ENCODE measurements at regions of chr1 and their contacts with region 1.

Region 1: DNA sequence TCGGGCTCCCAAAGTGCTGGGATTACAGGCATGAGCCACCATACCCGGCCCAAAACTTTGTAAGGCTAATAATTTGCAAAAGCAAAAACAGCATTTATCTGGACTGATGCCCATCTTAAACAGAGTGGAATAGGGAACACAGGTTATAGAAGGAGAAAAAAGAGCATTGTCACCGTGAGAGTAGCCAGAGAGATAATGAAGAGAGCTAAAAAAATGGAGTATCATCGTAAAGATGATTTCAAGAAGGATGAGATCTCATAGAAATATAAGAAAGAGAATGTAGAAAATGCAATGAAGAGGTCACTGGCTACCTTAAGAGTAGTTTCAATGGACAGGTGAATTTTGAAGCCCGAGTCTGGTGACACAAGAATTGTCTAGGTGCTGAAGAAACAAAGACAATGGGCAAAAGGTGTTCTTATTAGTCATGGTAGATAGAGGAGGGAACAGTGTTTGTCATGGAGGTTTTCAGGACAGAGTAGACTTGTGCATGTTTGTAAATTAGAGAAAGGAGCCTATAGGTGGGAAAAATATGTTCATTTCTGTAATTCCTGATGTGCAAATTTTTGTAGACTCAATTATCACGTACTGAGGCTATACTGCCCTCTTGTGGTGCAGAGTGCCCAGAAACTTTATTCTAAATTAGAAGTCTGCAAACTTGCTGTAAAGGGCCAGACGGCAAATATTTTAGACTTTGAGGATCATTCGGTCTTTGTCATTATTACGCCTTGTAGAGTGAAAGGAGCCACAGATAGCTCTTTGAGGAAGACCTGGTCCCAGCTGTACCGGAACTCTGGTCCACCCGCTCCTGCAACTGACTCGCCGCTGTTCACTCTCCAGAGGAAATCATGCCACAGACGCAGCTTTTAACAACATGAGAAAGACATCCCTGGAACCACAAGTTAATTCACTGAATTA is 8.1 kb upstream of the TMEM183A start:
- DNase-seq: peak; percentile 85
- H3K4me3 Mint-ChIP-seq: no peak overlapping the region
- H3K27ac Mint-ChIP-seq: no peak overlapping the region
- H3K4me1 Mint-ChIP-seq: peaks cover 15% of the 10 kb centered on the region
- H3K27me3 Mint-ChIP-seq: peaks cover 45% of the 10 kb centered on the region
- CTCF ChIP-seq: peak; percentile 96

Region 2: GRCh38 chr1:202074985-202075750 is 923.9 kb before region 1 on chr1:
- CTCF ChIA-PET with region 1: no interaction called
- POLR2A ChIA-PET with region 1: no interaction called
- intact Hi-C with region 1: no loop called
- DNase-seq: no peak
- H3K4me3 Mint-ChIP-seq: no peak overlapping the region
- H3K27ac Mint-ChIP-seq: no peak overlapping the region
- H3K4me1 Mint-ChIP-seq: peaks cover 12% of the 10 kb centered on the region
- H3K27me3 Mint-ChIP-seq: no peaks in the 10 kb centered on the region
- CTCF ChIP-seq: no peak

Region 3: DNA sequence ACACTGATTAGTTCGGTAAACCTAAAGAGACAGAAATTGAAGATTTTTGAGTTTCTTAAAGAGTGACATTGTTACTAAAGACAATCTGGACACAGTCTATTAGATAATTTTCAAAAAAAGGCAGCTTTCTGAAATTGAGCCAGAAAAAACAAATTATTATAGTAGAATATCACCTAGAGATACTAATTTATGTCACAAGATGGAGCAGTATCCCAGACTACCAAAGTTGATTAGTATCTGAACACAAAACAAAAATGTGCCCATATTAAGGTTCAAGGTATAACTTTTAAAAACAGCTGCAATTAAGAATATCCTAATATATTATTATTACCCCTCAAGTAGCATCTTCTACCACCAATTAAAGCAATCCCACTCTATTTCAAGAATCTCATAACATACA is 248.3 kb before region 1 on chr1:
- CTCF ChIA-PET with region 1: interaction called, 38 read pairs
- POLR2A ChIA-PET with region 1: no interaction called
- intact Hi-C with region 1: loop called (anchors 2 kb)
- DNase-seq: peak; percentile 12
- H3K4me3 Mint-ChIP-seq: no peak overlapping the region
- H3K27ac Mint-ChIP-seq: no peak overlapping the region
- H3K4me1 Mint-ChIP-seq: no peaks in the 10 kb centered on the region
- H3K27me3 Mint-ChIP-seq: no peaks in the 10 kb centered on the region
- CTCF ChIP-seq: peak; percentile 24

Region 4: DNA sequence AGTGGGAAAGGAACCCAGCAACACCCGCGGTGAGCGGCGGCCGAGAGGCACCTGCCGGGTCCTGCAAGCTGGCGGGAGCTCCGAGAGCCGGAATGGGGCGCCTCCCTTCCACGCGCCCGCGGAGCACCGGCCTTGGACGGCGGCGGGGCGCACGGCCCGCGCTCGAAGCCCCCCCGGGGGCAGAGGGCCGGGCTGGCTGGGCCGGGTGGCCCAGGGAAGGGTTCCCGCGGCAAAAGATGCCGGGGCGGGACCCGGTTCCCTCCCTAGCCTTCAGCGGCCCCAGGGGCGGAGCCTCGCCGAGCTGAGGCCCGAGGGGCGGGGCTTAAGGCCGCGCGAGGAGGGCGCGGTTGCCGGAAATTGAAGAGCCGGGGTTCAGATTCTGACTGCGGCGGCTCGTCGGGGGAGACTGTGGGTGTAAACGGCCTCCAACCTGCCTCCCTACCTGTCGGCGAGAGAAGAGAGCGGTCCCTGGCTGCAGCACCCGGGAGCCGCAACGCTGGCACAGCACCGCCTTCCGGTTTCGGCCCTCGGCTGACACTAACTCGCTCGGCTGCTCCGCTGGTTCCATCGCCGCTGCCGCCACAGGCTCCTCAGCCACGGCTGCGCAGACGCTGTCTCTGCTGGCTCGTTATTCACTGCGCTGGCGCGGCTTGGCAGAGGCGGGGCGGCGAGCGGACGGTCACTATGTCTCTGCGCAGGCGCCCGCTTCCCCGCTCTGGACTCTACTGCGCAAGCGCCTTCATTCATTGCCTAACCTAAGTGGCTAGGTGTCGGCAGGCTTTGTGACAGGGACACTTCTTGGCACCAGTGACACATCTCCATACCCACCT is 110.3 kb before region 1 on chr1 and contains the start of gene RABIF:
- CTCF ChIA-PET with region 1: interaction called, 3 read pairs
- POLR2A ChIA-PET with region 1: interaction called, 6 read pairs
- intact Hi-C with region 1: loop called (anchors 1 kb)
- DNase-seq: peak; percentile 99
- H3K4me3 Mint-ChIP-seq: peak within 1 kb of the TSS; percentile 97
- H3K27ac Mint-ChIP-seq: peak within 1 kb of the TSS; percentile 88
- H3K4me1 Mint-ChIP-seq: peaks cover 7% of the 10 kb centered on the region
- H3K27me3 Mint-ChIP-seq: no peaks in the 10 kb centered on the region
- CTCF ChIP-seq: no peak
- total RNA-seq, gene RABIF: 11.2 and 13.5 TPM in 2 replicates

Region 5: DNA sequence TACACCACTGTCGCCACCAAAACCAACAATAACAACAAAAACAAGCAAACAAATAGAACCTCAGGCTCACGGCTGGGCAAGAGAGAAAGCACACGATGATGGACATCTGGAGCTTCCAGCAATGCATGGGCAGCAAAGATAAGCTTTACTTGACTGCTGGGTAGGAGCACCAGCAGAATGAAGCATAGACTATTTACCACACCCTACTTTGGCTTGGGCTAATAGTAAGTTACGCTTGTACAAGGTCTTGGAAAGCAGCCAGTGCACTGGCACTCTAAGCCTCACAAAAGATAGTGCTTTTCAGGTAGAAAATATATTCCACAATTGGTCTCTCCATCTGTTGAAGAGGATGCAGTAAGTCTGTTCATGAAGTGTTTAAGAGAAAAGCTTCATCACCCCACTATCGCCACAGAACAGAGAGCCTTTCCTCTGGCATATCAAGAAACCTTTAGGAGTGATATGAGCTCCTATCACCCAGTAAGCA is 54.6 kb before region 1 on chr1:
- CTCF ChIA-PET with region 1: interaction called, 54 read pairs
- POLR2A ChIA-PET with region 1: interaction called, 4 read pairs
- intact Hi-C with region 1: no loop called
- DNase-seq: no peak
- H3K4me3 Mint-ChIP-seq: no peak overlapping the region
- H3K27ac Mint-ChIP-seq: no peak overlapping the region
- H3K4me1 Mint-ChIP-seq: no peaks in the 10 kb centered on the region
- H3K27me3 Mint-ChIP-seq: no peaks in the 10 kb centered on the region
- CTCF ChIP-seq: no peak

Region 6: GRCh38 chr1:202968840-202969295 is 30.2 kb before region 1 on chr1:
- CTCF ChIA-PET with region 1: interaction called, 19 read pairs
- POLR2A ChIA-PET with region 1: interaction called, 10 read pairs
- intact Hi-C with region 1: no loop called
- DNase-seq: peak; percentile 85
- H3K4me3 Mint-ChIP-seq: no peak overlapping the region
- H3K27ac Mint-ChIP-seq: no peak overlapping the region
- H3K4me1 Mint-ChIP-seq: peaks cover 29% of the 10 kb centered on the region
- H3K27me3 Mint-ChIP-seq: peaks cover 3% of the 10 kb centered on the region
- CTCF ChIP-seq: peak; percentile 79

Region 7: GRCh38 chr1:202987922-202988583 is 11.0 kb before region 1 on chr1:
- CTCF ChIA-PET with region 1: interaction called, 52 read pairs
- POLR2A ChIA-PET with region 1: interaction called, 6 read pairs
- intact Hi-C with region 1: no loop called
- DNase-seq: no peak
- H3K4me3 Mint-ChIP-seq: no peak overlapping the region
- H3K27ac Mint-ChIP-seq: no peak overlapping the region
- H3K4me1 Mint-ChIP-seq: no peaks in the 10 kb centered on the region
- H3K27me3 Mint-ChIP-seq: peaks cover 37% of the 10 kb centered on the region
- CTCF ChIP-seq: no peak

Region 8: GRCh38 chr1:203081461-203082230 is 82.6 kb after region 1 on chr1:
- CTCF ChIA-PET with region 1: no interaction called
- POLR2A ChIA-PET with region 1: no interaction called
- intact Hi-C with region 1: no loop called
- DNase-seq: no peak
- H3K4me3 Mint-ChIP-seq: no peak overlapping the region
- H3K27ac Mint-ChIP-seq: no peak overlapping the region
- H3K4me1 Mint-ChIP-seq: no peaks in the 10 kb centered on the region
- H3K27me3 Mint-ChIP-seq: peaks cover 43% of the 10 kb centered on the region
- CTCF ChIP-seq: no peak

Region 9: DNA sequence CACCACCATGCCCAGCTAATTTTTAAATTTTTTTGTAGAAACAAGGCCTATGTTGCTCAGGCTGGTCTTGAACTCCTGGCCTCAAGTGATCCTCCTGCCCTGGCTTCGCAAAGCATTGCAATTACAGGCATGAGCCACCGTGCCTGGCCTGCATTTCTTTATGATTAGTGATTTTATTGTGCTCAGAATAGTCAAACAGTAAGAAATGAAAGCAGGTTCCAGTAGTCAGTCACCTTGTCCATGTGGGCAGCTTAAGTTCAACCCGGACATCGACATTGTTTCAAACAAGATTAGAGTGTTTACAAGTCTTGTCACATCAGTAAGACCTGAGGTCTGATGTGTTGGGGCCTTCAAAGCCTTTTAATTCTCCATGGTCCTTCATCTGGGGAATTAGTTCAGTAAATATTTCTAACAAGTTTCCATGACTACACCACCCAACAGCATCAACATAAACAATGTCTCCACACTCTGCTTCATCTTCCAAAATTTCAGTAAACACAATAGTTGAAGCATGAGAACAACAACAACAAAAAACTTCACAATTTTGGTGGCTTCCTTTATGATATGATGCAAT is 113.3 kb after region 1 on chr1:
- CTCF ChIA-PET with region 1: no interaction called
- POLR2A ChIA-PET with region 1: no interaction called
- intact Hi-C with region 1: no loop called
- DNase-seq: no peak
- H3K4me3 Mint-ChIP-seq: no peak overlapping the region
- H3K27ac Mint-ChIP-seq: no peak overlapping the region
- H3K4me1 Mint-ChIP-seq: peaks cover 5% of the 10 kb centered on the region
- H3K27me3 Mint-ChIP-seq: peaks cover 34% of the 10 kb centered on the region
- CTCF ChIP-seq: no peak

Measured in MCF 10A (cell line).